CD8-positive, alpha-beta T cell (primary cell): ENCODE measurements at regions of chr11 and their contacts with region 1.

Region 1: GRCh38 chr11:61083601-61084147 is 18.6 kb upstream of the CD5 start:
- DNase-seq: peak in 7 of 9 experiments; percentile 38 to 91 (median 75)
- ATAC-seq: peak; percentile 66
- H3K4me3 ChIP-seq: peak overlapping the region in 1 of 2 experiments; percentile 9
- H3K4me3 Mint-ChIP-seq: peak overlapping the region; percentile 70
- H3K27ac ChIP-seq: peak overlapping the region; percentile 60 to 83
- H3K27ac Mint-ChIP-seq: peak overlapping the region; percentile 97
- H3K4me1 ChIP-seq: peaks cover 52% of the 10 kb centered on the region
- H3K4me1 Mint-ChIP-seq: peaks cover 53% of the 10 kb centered on the region
- H3K27me3 ChIP-seq: no peaks in the 10 kb centered on the region
- H3K27me3 Mint-ChIP-seq: no peaks in the 10 kb centered on the region
- CTCF ChIP-seq: no peak

Region 2: DNA sequence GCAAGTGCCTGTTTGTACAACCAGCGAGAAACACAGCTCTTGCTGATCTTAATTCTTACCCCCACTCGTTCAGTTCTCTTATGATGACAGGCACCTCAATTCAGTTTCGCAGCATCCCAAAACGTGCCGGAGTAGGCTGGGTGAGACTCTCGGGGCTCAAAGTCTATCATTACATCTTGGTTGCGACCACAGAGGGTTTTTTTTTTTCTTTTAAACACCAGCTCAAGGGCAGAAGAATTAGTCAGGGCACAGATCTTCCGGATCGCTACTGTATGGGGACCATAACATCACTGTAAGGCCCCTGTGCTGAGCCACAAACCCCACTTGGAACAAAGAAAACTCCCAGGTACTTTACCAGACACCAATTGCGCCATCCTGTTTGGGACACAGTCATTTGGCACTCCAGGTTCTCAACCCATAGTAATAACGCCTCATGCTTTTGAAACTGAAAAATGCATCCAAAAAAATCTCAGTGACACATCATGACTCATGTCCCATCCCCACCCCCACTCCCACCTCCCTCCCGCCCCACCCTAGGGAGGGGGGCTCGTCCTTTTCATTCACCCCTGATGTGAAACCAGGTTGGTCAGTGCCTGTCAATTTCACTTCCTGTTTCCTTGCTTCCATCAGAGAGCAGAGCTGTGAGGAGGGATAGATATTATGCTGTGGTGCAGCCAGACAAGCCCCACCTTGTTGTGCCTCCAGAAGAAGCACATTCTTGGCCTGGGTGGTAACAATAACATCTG is 22.4 kb before region 1 on chr11:
- CTCF ChIA-PET with region 1: interaction called, 6 read pairs
- POLR2A ChIA-PET with region 1: interaction called, 9 read pairs
- intact Hi-C with region 1: loop called in 1 of 2 experiments (anchors 2 kb)
- DNase-seq: peak in 8 of 9 experiments; percentile 55 to 94 (median 70)
- ATAC-seq: peak; percentile 82
- H3K4me3 ChIP-seq: peak overlapping the region; percentile 8 to 16
- H3K4me3 Mint-ChIP-seq: peak overlapping the region; percentile 76
- H3K27ac ChIP-seq: peak overlapping the region; percentile 9 to 81
- H3K27ac Mint-ChIP-seq: peak overlapping the region; percentile 92
- H3K4me1 ChIP-seq: peaks cover 37% of the 10 kb centered on the region
- H3K4me1 Mint-ChIP-seq: peaks cover 57% of the 10 kb centered on the region
- H3K27me3 ChIP-seq: no peaks in the 10 kb centered on the region
- H3K27me3 Mint-ChIP-seq: no peaks in the 10 kb centered on the region
- CTCF ChIP-seq: no peak

Region 3: GRCh38 chr11:61102667-61103571 is 19.2 kb after region 1 on chr11:
- CTCF ChIA-PET with region 1: interaction called, 4 read pairs
- POLR2A ChIA-PET with region 1: interaction called, 13 read pairs
- intact Hi-C with region 1: loop called in 1 of 2 experiments (anchors 2 kb)
- DNase-seq: peak in 2 of 9 experiments; percentile 49 to 72
- ATAC-seq: peak; percentile 31
- H3K4me3 ChIP-seq: peak overlapping the region; percentile 87 to 91
- H3K4me3 Mint-ChIP-seq: no peak overlapping the region
- H3K27ac ChIP-seq: peak overlapping the region; percentile 90 to 93
- H3K27ac Mint-ChIP-seq: no peak overlapping the region
- H3K4me1 ChIP-seq: peaks cover 48% of the 10 kb centered on the region
- H3K4me1 Mint-ChIP-seq: peaks cover 40% of the 10 kb centered on the region
- H3K27me3 ChIP-seq: no peaks in the 10 kb centered on the region
- H3K27me3 Mint-ChIP-seq: no peaks in the 10 kb centered on the region
- CTCF ChIP-seq: no peak

Region 4: GRCh38 chr11:61129639-61130523 is 46.2 kb after region 1 on chr11:
- CTCF ChIA-PET with region 1: interaction called, 16 read pairs
- POLR2A ChIA-PET with region 1: interaction called, 8 read pairs
- intact Hi-C with region 1: loop called (anchors 2 kb)
- DNase-seq: peak; percentile 76 to 95 (median 91)
- ATAC-seq: peak; percentile 91
- H3K4me3 ChIP-seq: no peak overlapping the region
- H3K4me3 Mint-ChIP-seq: peak overlapping the region; percentile 46
- H3K27ac ChIP-seq: no peak overlapping the region
- H3K27ac Mint-ChIP-seq: peak overlapping the region; percentile 64
- H3K4me1 ChIP-seq: peaks cover 17% of the 10 kb centered on the region
- H3K4me1 Mint-ChIP-seq: peaks cover 21% of the 10 kb centered on the region
- H3K27me3 ChIP-seq: no peaks in the 10 kb centered on the region
- H3K27me3 Mint-ChIP-seq: no peaks in the 10 kb centered on the region
- CTCF ChIP-seq: peak; percentile 100